HCT116 (cell line): ENCODE measurements at regions of chr5 and their contacts with region 1.

Region 1: DNA sequence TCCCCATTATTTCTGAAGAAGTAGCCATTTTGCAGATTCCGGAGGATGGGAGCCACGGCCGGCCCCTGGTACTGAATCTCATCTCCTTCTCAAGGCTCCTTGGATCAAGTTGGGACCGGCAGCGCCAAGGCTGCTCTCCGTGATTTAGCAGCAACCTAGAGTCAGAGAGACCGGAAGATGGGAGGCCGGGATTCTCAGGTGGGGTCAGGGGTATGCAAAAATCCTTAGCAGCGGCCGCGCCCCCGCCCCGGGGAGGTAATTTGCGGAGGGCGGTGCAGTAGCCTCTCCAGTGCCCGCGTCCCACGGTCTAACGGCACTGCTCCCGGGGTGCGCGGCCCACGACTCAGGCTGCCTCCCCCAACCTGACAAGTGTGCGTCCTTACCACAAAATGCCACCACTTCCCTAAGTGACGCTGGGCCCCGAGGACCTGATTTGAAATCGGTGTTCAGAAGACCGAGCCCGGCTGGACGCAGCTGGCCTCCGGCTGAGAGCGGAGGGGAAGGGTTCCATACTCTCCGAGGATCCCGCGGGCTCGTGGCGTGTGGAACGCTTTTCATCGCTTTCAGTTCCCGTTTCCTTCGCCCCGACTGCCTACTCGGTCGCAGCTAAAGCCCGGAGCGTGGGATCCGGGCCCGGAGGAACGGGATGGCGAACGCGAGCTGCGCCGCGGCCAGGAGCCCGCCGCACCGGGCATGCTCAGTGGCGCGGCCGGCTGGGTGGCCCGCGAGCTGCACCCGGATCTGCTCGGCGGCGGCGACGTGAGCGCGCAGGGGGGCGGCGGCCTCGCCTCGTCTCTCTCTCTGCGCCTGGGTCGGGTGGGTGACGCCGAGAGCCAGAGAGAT is at the start of gene SCAMP1:
- DNase-seq: peak; percentile 87
- ATAC-seq: peak; percentile 91
- H3K4me3 ChIP-seq: peak within 1 kb of the TSS; percentile 92 to 94
- H3K27ac ChIP-seq: peak within 1 kb of the TSS; percentile 93
- H3K4me1 ChIP-seq: peaks cover 9 to 13% of the 10 kb centered on the region in 2 experiments; a peak in 3 of 4 replicates
- H3K27me3 ChIP-seq: no peaks in the 10 kb centered on the region
- CTCF ChIP-seq: peak in 2 of 3 experiments; percentile 27 to 36; a peak in 3 of 6 replicates
- POLR2A ChIP-seq: peak; percentile 74
- RAD21 ChIP-seq: no peak
- total RNA-seq, gene SCAMP1: 46.4 TPM

Region 2: DNA sequence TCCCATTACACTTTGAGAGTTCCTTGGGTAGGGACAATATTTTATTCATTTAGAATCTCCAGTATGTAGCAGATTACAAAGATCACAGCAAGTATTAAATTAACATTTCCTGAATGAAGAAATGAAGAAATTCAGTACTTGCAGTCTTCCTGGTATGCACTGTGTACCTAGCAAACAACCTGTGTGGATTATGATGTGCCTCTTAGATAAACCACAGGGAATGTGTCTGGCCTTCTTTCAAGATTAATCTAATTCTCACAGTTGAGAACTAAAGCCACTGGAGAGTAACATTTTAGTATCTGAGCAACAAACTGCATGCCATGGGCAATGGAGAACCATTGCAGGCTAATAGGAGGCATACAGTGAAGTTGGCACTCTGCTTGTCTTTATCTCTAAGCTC is 264.9 kb before region 1 on chr5:
- CTCF ChIA-PET with region 1: no interaction called
- POLR2A ChIA-PET with region 1: no interaction called
- RAD21 ChIA-PET with region 1: no interaction called
- intact Hi-C with region 1: no loop called
- DNase-seq: no peak
- ATAC-seq: no peak
- H3K4me3 ChIP-seq: no peak overlapping the region
- H3K27ac ChIP-seq: no peak overlapping the region
- H3K4me1 ChIP-seq: no peaks in the 10 kb centered on the region
- H3K27me3 ChIP-seq: no peaks in the 10 kb centered on the region
- CTCF ChIP-seq: no peak
- POLR2A ChIP-seq: no peak
- RAD21 ChIP-seq: no peak

Region 3: GRCh38 chr5:78294248-78295034 is 65.6 kb before region 1 on chr5 and contains the start of gene AP3B1:
- CTCF ChIA-PET with region 1: interaction called, 7 read pairs
- POLR2A ChIA-PET with region 1: interaction called, 11 read pairs
- RAD21 ChIA-PET with region 1: no interaction called
- intact Hi-C with region 1: loop called (anchors 1 kb)
- DNase-seq: peak; percentile 97
- ATAC-seq: peak; percentile 91
- H3K4me3 ChIP-seq: peak within 1 kb of the TSS; percentile 80 to 94
- H3K27ac ChIP-seq: peak within 1 kb of the TSS; percentile 73
- H3K4me1 ChIP-seq: peaks cover 2 to 8% of the 10 kb centered on the region in 2 experiments; a peak in 2 of 4 replicates
- H3K27me3 ChIP-seq: no peaks in the 10 kb centered on the region
- CTCF ChIP-seq: no peak
- POLR2A ChIP-seq: peak; percentile 81
- RAD21 ChIP-seq: no peak
- total RNA-seq, gene AP3B1: 54.5 TPM